ENCODE measurements at regions of chr5 and their contacts with region 1.

Region 1: DNA sequence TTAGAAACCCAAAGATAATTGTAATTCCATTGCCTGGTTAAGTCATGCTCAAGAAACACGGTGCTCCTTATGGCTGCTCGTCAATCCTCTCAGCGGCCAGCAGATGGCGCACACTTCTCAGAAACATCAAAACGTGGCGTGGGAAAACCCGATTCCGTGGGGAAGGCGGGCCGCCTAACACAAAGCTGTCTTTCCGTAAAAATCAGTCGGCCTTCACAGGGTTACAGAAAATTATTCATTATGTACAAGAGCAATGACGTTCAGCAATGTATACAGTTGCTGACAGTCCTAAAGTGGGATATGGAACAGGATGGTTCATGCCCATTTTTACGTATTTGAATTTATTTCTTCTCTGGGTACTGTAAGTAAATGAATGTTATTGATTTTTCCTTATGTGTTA is 83.5 kb downstream of the PDE4D start:
- DNase-seq: no peak
- H3K4me3 ChIP-seq: peak overlapping the region; percentile 3; the same call in 1 of the 2 replicates
- CTCF ChIP-seq: peak; percentile 85

Region 2: DNA sequence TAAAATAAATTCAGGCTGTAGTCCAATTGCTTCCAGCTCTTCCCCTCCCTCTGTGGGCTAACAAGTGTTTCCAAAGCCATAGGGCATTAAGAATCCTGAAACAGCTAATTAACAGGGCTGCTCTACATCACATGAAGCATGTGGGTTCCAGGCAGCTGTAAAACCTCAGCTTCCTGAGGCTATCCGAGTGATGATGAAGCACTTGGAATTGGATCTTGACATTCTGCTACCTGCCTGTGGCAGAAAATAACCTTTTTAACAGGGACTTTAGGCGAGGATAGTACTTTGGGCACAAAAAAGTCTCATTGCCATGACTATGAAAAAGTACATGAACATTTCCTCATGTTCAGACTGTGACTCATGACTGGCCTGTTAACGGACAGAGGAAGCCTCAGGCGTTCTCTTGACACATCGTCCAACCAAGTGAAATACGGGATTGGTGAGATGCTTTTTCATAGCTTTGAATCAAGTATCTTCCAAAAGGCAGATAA is 23.7 kb before region 1 on chr5:
- CTCF ChIA-PET with region 1: interaction called, 12 read pairs
- POLR2A ChIA-PET with region 1: no interaction called
- DNase-seq: peak; percentile 59
- H3K4me3 ChIP-seq: no peak overlapping the region
- CTCF ChIP-seq: no peak

Region 3: DNA sequence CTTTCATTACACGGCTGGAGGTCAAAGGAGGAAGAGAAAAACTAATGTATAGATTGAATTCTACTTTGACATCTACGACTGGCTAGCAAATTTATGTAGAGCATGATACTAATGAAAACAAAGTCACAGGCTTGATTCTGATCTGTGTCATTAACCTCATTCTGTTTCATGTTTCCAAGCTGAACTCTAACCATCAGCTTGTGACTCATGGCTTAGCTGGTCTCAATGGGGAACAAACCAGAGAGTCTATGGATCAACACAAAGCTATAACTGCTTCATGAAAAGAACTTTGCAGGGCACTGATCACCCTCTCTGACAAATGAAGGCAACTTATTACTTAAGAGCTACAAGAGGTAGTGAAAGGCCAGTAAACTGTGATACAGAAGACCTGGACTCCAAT is 107.1 kb after region 1 on chr5:
- CTCF ChIA-PET with region 1: interaction called, 50 read pairs
- POLR2A ChIA-PET with region 1: no interaction called
- DNase-seq: no peak
- H3K4me3 ChIP-seq: no peak overlapping the region
- CTCF ChIP-seq: no peak

Region 4: DNA sequence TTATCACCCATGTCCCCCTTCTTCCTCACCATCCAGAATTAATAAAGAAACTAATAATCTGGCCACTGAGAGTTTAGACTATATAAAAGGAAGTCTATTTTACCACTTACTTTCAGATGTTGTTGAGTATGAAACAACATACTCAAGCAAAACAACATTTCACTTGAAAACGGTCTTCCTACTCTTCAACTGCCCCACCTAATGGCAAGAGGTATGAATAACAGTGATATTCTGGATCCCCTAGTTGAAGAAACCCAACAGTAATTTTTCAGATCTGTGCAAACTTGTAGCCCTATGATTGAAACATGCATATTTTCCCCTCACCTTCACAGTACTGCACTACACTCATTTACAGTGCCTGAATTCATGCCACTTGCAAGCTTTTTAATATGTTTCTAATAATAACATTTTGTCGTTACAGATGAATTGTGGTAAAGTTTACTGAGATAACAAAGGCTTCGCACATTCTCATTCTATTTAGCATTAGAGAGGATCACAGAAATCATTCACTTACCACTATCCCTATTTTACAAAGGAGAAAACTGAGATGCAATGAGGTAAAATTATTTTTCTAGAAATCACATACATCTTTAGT is 351.4 kb after region 1 on chr5:
- CTCF ChIA-PET with region 1: interaction called, 24 read pairs
- POLR2A ChIA-PET with region 1: no interaction called
- DNase-seq: no peak
- H3K4me3 ChIP-seq: no peak overlapping the region
- CTCF ChIP-seq: peak; percentile 47

Region 5: DNA sequence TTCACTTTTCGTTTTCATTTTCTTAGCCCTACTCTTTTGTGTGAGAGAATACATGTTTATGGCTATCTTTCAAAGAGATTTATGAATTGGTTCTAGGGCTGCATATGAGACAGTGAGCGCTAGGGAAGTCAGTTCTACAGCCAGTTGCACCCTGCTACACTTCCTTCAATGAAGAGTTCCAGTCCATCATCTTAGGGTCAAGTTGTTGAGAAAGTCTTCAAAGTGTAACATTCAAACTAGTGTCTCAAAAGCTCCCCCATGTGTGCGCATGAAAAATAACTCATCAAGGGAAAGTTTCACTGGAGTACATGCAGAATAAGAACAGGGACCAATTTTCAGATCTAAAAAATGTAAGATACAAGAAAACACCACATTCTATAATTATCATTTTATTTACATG is 572.7 kb after region 1 on chr5:
- CTCF ChIA-PET with region 1: interaction called, 20 read pairs
- POLR2A ChIA-PET with region 1: no interaction called
- DNase-seq: no peak
- H3K4me3 ChIP-seq: no peak overlapping the region
- CTCF ChIP-seq: peak; percentile 33

Measured in AG04449 (cell line).